Activated T-helper 2 cell treated with anti-CD3 and anti-CD28 coated beads, Interferon-gamma antibody, Interleukin-2, Interleukin-4, amounts not matched to agents 10 μg/mL and 5 μg/mL and 100 μg/mL, durations not matched to agents 14 hours and 24 hours and 36 hours (primary cell): ENCODE measurements at regions of chr11 and their contacts with region 1.

Region 1: DNA sequence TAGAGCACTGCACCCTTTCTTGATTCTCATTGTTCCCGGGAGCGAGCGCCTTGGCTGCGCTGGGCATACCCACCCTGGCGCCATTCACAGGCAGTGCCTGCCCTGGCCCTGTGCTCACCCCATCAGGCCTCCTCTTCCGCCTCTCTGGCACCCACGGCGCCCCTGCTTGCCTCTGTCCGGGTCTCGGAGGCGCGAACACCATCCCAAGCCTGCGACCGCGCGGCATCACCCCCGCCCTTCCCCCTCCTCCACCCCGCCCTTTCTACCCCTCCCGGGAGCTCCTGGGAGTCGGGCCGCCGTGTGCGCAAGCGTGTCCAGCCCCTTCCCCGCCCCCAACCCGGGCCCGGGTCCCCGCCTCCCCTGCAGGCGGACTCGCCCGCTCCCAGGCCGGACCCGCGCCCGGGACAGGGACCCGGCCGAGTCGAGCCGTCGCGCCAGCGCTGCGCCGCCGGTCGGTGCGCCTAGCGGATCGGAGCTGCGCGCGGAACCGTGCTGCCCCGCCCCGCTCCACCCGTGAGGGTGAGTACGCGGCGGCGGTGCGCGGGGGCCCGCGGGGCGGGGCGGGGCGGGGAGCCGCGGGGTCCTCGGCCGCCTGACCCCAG is at the start of gene ST3GAL4:
- DNase-seq: peak; percentile 66
- H3K4me3 Mint-ChIP-seq: peak within 1 kb of the TSS; percentile 98
- H3K27ac Mint-ChIP-seq: peak within 1 kb of the TSS; percentile 91
- H3K4me1 Mint-ChIP-seq: peaks cover 35% of the 10 kb centered on the region
- H3K27me3 Mint-ChIP-seq: no peaks in the 10 kb centered on the region
- total RNA-seq, gene ST3GAL4: 12.4 and 14.4 TPM in 2 replicates

Region 2: DNA sequence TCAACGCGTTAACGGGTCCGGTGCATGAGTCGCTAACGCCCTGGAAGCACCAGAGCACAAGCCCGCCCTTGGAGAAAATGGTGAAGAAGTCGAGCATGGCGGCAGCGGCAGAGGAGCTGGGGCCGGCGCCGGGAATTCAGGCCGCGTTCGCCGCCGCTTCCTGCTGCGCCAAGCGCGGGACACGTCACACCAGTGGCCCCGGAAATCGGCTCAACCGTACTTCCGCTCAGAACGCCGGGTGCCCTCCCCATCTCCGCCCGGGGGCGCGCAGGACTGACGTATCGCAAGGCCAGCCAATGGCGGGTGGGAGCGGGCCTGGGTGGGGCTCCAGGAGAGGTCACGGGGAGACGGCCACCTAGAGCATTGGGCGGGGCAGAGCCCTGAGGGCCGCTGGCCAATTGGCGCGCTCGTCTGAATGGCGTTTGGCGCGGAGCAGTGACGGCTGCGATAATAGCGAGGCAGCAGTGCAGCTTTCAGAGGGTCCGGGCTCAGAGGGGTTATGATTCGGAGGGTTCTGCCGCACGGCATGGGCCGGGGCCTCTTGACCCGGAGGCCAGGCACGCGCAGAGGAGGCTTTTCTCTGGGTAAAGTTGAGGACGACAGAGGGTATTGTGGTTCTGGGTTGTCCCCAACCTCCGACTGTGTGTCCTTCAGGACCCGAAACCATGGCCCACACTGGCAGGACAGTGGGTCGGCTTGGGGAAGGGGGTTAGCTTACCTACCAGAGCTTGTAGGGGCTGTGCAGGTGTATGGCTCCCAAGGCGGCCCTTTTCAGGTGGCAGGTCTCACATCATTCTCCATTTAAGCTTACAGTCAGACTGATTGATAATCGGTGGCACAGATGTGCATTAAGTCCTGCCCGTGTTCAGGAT is 86.5 kb before region 1 on chr11 and contains the starts of genes FOXRED1 and SRPRA:
- intact Hi-C with region 1: loop called (anchors 1 kb)
- DNase-seq: peak; percentile 100
- H3K4me3 Mint-ChIP-seq: peak within 1 kb of the TSS; percentile 94
- H3K27ac Mint-ChIP-seq: peak within 1 kb of the TSS; percentile 97
- H3K4me1 Mint-ChIP-seq: peaks cover 28% of the 10 kb centered on the region
- H3K27me3 Mint-ChIP-seq: no peaks in the 10 kb centered on the region
- total RNA-seq, gene FOXRED1: 48.7 and 52.3 TPM in 2 replicates
- total RNA-seq, gene SRPRA: 175 and 177 TPM in 2 replicates

Region 3: GRCh38 chr11:126303623-126304456 is 51.6 kb before region 1 on chr11 and contains the start of gene DCPS:
- intact Hi-C with region 1: loop called (anchors 5 kb)
- DNase-seq: peak; percentile 87
- H3K4me3 Mint-ChIP-seq: peak within 1 kb of the TSS; percentile 99
- H3K27ac Mint-ChIP-seq: peak within 1 kb of the TSS; percentile 98
- H3K4me1 Mint-ChIP-seq: peaks cover 27% of the 10 kb centered on the region
- H3K27me3 Mint-ChIP-seq: no peaks in the 10 kb centered on the region
- total RNA-seq, gene DCPS: 39.8 and 42.1 TPM in 2 replicates

Region 4: GRCh38 chr11:126317756-126318573 is 37.5 kb before region 1 on chr11:
- intact Hi-C with region 1: loop called (anchors 2 kb)
- DNase-seq: no peak
- H3K4me3 Mint-ChIP-seq: peak overlapping the region; percentile 45
- H3K27ac Mint-ChIP-seq: peak overlapping the region; percentile 77
- H3K4me1 Mint-ChIP-seq: peaks cover 39% of the 10 kb centered on the region
- H3K27me3 Mint-ChIP-seq: no peaks in the 10 kb centered on the region

Region 5: GRCh38 chr11:126332131-126332711 is 23.2 kb before region 1 on chr11:
- intact Hi-C with region 1: no loop called
- DNase-seq: no peak
- H3K4me3 Mint-ChIP-seq: no peak overlapping the region
- H3K27ac Mint-ChIP-seq: no peak overlapping the region
- H3K4me1 Mint-ChIP-seq: peaks cover 33% of the 10 kb centered on the region
- H3K27me3 Mint-ChIP-seq: no peaks in the 10 kb centered on the region